Dendritic cell treated with granulocyte-macrophage colony-stimulating factor and Interleukin-4, amounts not matched to agents 40 ng/mL and 50 ng/mL, for 4 days (primary cell): ENCODE measurements at regions of chr15 and their contacts with region 1.

Region 1: GRCh38 chr15:38084289-38084688 is 149.8 kb downstream of the TMCO5A start:
- H3K4me3 Mint-ChIP-seq: no peak overlapping the region
- H3K27ac Mint-ChIP-seq: peak overlapping the region; percentile 71
- H3K4me1 Mint-ChIP-seq: peaks cover 55% of the 10 kb centered on the region
- H3K27me3 Mint-ChIP-seq: peaks cover 2% of the 10 kb centered on the region

Region 2: GRCh38 chr15:37880009-37880834 is 204.1 kb before region 1 on chr15:
- intact Hi-C with region 1: no loop called
- H3K4me3 Mint-ChIP-seq: no peak overlapping the region
- H3K27ac Mint-ChIP-seq: no peak overlapping the region
- H3K4me1 Mint-ChIP-seq: no peaks in the 10 kb centered on the region
- H3K27me3 Mint-ChIP-seq: peaks cover 3% of the 10 kb centered on the region

Region 3: DNA sequence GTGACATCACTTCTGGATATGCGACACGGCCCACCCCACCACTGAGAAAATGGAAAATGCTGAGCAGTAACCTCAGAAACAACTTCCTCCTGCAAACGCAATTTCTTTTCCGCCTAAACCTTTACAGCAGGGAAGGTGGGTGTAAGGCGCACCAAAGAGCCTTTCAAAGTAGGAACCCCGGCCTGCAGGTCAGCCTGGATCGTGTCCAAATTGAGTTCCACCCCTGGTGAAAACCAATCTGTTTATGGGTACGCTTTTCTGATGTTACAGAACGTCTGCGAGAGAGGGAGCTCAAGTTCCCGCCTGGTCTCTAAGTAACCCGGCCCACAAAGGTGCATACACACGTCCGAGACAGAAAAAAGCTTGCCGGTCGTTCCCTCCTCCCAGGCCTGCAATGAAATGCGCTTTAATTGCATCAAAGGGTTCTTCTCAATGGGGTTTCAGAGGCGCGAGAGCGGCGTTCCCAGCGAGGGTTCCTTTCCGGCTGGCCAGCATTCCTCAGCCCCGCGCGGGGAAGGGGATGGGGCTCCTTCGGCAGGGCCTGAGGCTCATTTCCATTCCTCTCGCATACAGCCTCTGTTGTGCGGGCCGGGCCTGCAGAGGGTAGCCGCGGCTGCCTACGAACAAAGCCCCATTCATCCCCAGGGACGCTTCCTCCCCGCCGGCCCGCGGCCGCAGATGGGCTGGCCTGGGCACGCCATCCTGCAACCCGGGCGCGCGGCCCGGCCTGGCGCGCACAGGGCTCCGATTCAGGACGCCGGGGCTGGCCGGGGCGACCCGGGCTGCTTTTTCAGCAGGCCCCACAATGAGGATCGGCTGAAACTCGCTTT is 11.7 kb before region 1 on chr15:
- intact Hi-C with region 1: loop called (anchors 1 kb)
- H3K4me3 Mint-ChIP-seq: peak overlapping the region; percentile 69
- H3K27ac Mint-ChIP-seq: peak overlapping the region; percentile 99
- H3K4me1 Mint-ChIP-seq: peaks cover 78% of the 10 kb centered on the region
- H3K27me3 Mint-ChIP-seq: peaks cover 21% of the 10 kb centered on the region